Right lobe of liver (tissue), 6 donors: ENCODE measurements at regions of chr3 and their contacts with region 1.

Region 1: GRCh38 chr3:185983495-185984141 is 45.8 kb upstream of the TRA2B start:
- DNase-seq: peak; percentile 50 to 78 (median 71)
- ATAC-seq: peak; percentile 97 to 99 (median 98)
- H3K4me3 ChIP-seq: no peak overlapping the region
- H3K27ac ChIP-seq: no peak overlapping the region
- H3K4me1 ChIP-seq: no peaks in the 10 kb centered on the region
- H3K27me3 ChIP-seq: no peaks in the 10 kb centered on the region
- CTCF ChIP-seq: peak; percentile 90 to 97 (median 92)
- POLR2A ChIP-seq: no peak

Region 2: GRCh38 chr3:185865247-185865646 is 118.4 kb before region 1 on chr3:
- intact Hi-C with region 1: no loop called
- DNase-seq: no peak
- ATAC-seq: no peak
- H3K4me3 ChIP-seq: no peak overlapping the region
- H3K27ac ChIP-seq: no peak overlapping the region
- H3K4me1 ChIP-seq: no peaks in the 10 kb centered on the region
- H3K27me3 ChIP-seq: no peaks in the 10 kb centered on the region
- CTCF ChIP-seq: no peak
- POLR2A ChIP-seq: no peak

Region 3: DNA sequence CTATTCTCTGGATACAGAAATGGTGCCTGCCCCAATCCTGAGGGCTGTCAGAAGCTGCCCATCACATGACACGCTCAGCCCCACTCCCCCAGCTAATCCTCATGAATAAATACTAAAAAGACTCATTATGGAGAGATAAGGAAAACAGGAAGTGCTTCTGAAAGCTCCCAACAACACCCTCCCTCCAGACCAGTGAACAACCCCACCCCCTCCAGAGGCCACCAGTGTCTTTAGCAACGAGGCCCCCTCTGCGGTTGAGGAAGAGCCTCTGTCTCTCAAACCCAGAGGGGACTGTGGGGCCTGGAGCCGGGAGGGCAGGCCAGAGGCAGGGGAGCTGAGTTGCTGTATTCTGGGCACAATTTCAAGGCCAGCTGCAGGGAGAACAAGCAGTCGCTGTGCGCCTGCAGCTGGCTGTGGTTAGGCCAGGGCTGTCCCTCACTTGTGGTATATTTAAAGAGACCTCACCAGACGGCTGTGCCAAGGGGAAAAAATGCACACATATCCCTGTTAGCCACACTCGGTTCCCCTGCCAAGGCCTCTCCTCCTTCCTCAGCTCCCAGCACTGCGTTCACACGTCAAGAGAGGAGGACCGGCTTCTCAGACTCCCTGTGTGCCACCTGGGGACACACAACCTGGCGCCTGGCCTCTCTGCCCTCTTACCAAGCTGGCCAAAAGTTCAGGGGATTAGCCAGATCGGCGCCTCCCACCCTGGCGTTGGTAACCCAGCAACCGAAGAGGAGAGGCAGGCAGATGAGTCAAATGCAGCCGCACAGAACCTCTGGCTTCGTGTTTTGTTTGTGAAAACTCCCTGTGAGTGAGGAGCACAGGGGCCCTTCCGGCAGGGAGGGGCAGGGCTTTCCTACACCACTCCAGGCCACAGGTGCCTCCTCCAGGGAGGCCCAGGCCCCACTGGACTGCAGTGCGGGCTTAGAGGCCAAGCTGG is 226.5 kb after region 1 on chr3:
- intact Hi-C with region 1: no loop called
- DNase-seq: no peak
- ATAC-seq: peak; percentile 42 to 62 (median 45)
- H3K4me3 ChIP-seq: no peak overlapping the region
- H3K27ac ChIP-seq: no peak overlapping the region
- H3K4me1 ChIP-seq: no peaks in the 10 kb centered on the region
- H3K27me3 ChIP-seq: no peaks in the 10 kb centered on the region
- CTCF ChIP-seq: no peak
- POLR2A ChIP-seq: no peak

Region 4: GRCh38 chr3:186241910-186242821 is 258.5 kb after region 1 on chr3:
- intact Hi-C with region 1: loop called in 1 of 2 experiments (anchors 5 kb)
- DNase-seq: peak; percentile 75 to 84 (median 77)
- ATAC-seq: peak; percentile 92 to 94 (median 92)
- H3K4me3 ChIP-seq: peak overlapping the region in 2 of 3 donors; percentile 19 to 46
- H3K27ac ChIP-seq: no peak overlapping the region
- H3K4me1 ChIP-seq: peaks cover 0 to 5% (median 2%) of the 10 kb centered on the region in 4 donors
- H3K27me3 ChIP-seq: no peaks in the 10 kb centered on the region
- CTCF ChIP-seq: peak; percentile 57 to 71 (median 60)
- POLR2A ChIP-seq: no peak

Region 5: GRCh38 chr3:186259612-186260383 is 276.2 kb after region 1 on chr3:
- intact Hi-C with region 1: loop called in 1 of 2 experiments (anchors 5 kb)
- DNase-seq: peak; percentile 78 to 83 (median 79)
- ATAC-seq: peak; percentile 97 to 99 (median 98)
- H3K4me3 ChIP-seq: no peak overlapping the region
- H3K27ac ChIP-seq: no peak overlapping the region
- H3K4me1 ChIP-seq: no peaks in the 10 kb centered on the region
- H3K27me3 ChIP-seq: no peaks in the 10 kb centered on the region
- CTCF ChIP-seq: peak; percentile 78 to 92 (median 89)
- POLR2A ChIP-seq: no peak